Motor neuron (in vitro differentiated cells): ENCODE measurements at regions of chr9 and their contacts with region 1.

Region 1: GRCh38 chr9:124617471-124618141 is 110.4 kb upstream of the NR5A1 start:
- ATAC-seq: peak; percentile 94 to 98 (median 98)
- H3K4me3 ChIP-seq: no peak overlapping the region
- H3K27ac ChIP-seq: no peak overlapping the region
- H3K4me1 ChIP-seq: peaks cover 6 to 7% of the 10 kb centered on the region in 2 donors

Region 2: DNA sequence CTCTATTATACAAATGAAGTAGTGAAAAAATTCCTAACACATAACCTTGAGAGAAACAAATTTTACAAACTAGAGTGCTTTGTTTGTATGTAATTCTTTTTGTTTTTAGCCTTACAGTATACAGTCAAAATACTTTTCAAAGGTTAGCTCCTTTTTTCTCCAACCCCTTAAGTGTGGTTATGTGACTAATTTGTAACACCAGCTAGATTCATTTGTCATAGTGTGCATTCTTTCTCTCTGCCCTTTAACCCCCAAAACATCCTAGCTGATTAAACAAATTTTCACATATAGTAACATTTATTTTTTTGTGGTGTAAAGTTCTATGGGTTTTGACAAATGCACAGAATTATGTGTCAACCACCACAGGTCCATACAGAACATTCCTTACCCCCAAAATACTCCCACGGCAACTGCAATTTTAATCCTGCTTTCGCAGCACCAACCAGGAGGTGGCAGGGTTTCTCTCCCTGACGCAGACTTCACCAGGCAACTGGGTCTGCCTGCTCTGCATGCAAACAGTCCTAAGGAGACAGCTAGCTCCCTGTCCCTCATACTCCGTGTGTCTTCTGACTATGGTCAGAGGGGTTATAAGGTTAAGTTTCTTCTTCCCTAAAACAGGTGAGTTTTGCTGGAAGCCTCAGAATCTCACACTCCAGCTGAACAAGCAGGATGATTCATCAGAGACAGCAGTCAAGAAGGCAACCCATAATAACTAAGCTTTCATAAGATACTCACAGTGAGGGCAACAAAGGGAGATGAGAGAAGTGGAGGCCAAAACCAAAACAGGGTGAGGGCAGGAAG is 65.9 kb before region 1 on chr9:
- in situ Hi-C with region 1: loop called in 1 of 9 experiments (anchors 10 kb)
- ATAC-seq: peak; percentile 92 to 98 (median 95)
- H3K4me3 ChIP-seq: no peak overlapping the region
- H3K27ac ChIP-seq: no peak overlapping the region
- H3K4me1 ChIP-seq: peaks cover 0 to 2% of the 10 kb centered on the region in 2 donors

Region 3: GRCh38 chr9:124708633-124709291 is 91.2 kb after region 1 on chr9:
- in situ Hi-C with region 1: loop called in 3 of 9 experiments (anchors 5 to 25 kb)
- ATAC-seq: peak in 2 of 8 experiments; percentile 10 to 36
- H3K4me3 ChIP-seq: no peak overlapping the region
- H3K27ac ChIP-seq: no peak overlapping the region
- H3K4me1 ChIP-seq: no peaks in the 10 kb centered on the region

Region 4: DNA sequence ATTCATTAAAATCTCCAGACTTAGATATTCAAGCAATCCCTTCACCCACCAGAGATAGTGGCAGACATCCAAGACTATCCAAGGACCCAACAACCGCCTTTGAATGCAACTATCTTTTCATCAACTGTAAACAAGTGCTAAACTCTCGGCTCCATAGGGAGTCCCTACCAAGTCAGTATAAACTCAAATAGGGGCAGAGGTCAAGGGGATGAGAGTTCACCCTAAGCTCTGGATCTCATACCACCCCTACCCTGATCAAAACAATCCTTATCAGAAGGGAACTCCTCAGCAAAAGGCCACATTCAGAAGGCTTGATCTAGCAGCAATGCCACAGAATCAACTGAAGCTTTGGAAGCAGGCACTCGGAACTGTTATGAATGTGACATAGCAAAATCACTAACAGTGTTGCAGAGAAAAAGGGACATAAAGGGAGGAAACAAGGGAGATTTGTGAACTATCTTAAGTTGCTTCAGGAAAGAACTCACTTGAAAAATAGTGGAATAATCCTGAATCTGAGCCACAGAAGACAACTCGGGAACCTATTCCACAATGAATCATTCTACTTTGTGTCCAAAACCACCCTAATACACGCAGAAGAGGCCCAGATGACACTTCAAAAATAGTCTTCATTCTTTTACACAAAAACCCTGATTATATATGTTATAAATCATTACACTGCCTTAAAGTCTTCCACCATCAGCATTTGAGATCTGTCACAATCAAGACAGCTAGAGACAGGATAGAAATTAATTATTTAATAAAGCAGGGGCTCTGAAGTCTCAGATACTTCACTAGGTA is 103.7 kb after region 1 on chr9:
- in situ Hi-C with region 1: loop called in 2 of 9 experiments (anchors 25 kb)
- ATAC-seq: peak in 4 of 8 experiments; percentile 23 to 63 (median 42)
- H3K4me3 ChIP-seq: no peak overlapping the region
- H3K27ac ChIP-seq: no peak overlapping the region
- H3K4me1 ChIP-seq: peaks cover 7 to 8% of the 10 kb centered on the region in 2 donors

Region 5: DNA sequence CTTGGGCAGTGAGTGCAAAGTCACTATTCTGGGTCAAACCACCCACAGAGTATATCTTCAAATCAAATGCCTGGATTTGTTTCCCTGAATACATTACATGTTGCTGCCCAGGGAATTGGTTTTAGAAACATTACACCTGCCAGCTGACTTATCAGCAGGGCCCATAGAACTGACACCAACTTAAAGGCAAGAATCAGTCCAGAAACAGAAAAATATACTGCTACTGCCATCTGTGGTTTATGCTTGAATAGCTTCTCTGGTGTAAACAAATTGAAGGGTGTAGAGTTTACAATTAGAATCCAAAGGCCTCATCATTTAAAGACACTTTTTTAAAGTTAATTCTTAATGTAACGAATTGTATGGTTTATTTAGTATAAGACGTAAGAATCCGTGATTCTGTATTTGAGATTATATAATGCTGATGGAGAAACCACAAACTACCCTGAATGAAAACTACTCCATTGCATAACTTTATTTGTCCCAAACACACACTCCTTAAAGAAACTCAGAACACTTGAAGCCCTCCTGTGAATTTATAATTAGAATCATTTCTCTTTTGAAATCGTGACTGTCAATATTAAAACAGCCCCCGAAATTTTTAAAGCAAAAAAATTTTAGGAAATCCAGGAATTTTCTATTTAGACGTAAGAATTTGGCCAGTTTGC is 147.3 kb after region 1 on chr9:
- in situ Hi-C with region 1: loop called in 1 of 9 experiments (anchors 10 kb)
- ATAC-seq: peak in 7 of 8 experiments; percentile 44 to 72 (median 57)
- H3K4me3 ChIP-seq: no peak overlapping the region
- H3K27ac ChIP-seq: no peak overlapping the region
- H3K4me1 ChIP-seq: peaks cover 20 to 44% of the 10 kb centered on the region in 2 donors